Colonic mucosa (tissue), 4 donors: ENCODE measurements at regions of chr10 and their contacts with region 1.

Region 1: DNA sequence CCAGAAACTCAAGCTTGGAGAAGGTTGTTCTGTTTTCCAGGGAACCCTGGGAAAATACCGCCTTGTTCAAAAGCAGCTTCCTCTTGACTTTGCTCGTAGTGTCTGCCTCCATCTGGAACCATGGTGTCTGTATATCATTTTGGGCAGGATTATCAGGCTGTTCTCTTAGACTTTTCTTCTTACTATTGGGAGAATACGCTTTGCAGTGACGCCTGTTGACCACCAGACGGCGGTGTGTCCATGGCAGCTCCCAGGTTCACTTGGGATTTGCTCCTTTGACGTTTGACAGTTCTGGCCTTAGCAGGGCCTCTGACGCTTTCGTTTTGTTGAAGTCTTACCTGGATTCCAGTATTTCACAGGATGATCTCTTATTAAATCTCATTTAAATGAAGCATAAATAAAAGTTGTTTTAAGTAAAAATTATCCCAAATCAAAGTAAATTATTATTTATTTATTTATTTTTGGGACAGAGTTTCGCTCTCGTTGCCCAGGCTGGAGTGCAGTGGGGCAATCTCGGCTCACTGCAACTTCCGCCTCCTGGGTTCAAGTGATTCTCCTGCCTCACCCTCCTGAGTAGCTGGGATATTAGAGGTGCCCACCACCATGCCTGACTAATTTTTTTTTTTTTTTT is 41.8 kb upstream of the GJD4 start:
- DNase-seq: peak; percentile 45
- H3K4me3 ChIP-seq: no peak overlapping the region
- H3K27ac ChIP-seq: no peak overlapping the region
- H3K4me1 ChIP-seq: no peaks in the 10 kb centered on the region
- H3K27me3 ChIP-seq: no peaks in the 10 kb centered on the region
- CTCF ChIP-seq: peak; percentile 97

Region 2: GRCh38 chr10:35236739-35237138 is 326.6 kb before region 1 on chr10:
- intact Hi-C with region 1: loop called (anchors 10 kb)
- DNase-seq: no peak
- H3K4me3 ChIP-seq: no peak overlapping the region
- H3K27ac ChIP-seq: no peak overlapping the region
- H3K4me1 ChIP-seq: no peaks in the 10 kb centered on the region
- H3K27me3 ChIP-seq: no peaks in the 10 kb centered on the region
- CTCF ChIP-seq: no peak

Region 3: DNA sequence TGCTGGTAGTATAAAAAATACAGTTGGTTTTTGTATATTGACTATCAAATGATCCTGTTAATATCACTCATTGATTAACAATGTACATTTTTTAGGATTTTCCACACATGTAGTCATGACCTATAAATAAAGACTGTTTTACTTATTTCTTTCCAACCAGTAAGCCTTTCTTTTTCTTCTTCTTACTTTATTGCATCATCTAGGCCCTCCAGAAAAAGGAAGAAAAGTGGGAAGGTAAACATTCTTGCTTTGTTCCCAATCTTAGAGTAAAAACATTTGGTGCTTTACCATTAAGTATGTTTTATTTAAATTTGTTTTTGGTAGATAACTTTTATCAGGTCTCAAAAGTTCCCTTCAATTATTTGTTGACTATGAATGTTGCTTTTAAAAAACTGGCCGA is 274.2 kb before region 1 on chr10:
- intact Hi-C with region 1: no loop called
- DNase-seq: no peak
- H3K4me3 ChIP-seq: no peak overlapping the region
- H3K27ac ChIP-seq: no peak overlapping the region
- H3K4me1 ChIP-seq: no peaks in the 10 kb centered on the region
- H3K27me3 ChIP-seq: no peaks in the 10 kb centered on the region
- CTCF ChIP-seq: no peak